Activated T-helper 1 cell treated with anti-CD3 and anti-CD28 coated beads, Interleukin-12 subunit alpha, Interleukin-12 subunit beta, Interleukin-2, Interleukin-4 antibody, amounts not matched to agents 30 ng/mL and 10 ng/mL and 1 ng/mL, durations not matched to agents 14 hours and 24 hours and 36 hours (primary cell): ENCODE measurements at regions of chr19 and their contacts with region 1.

Region 1: GRCh38 chr19:40305403-40305802 is 20.3 kb upstream of the AKT2 start:
- DNase-seq: peak; percentile 56
- H3K4me3 Mint-ChIP-seq: no peak overlapping the region
- H3K27ac Mint-ChIP-seq: no peak overlapping the region
- H3K4me1 Mint-ChIP-seq: no peaks in the 10 kb centered on the region
- H3K27me3 Mint-ChIP-seq: no peaks in the 10 kb centered on the region

Region 2: GRCh38 chr19:40365613-40366401 is 60.4 kb after region 1 on chr19:
- intact Hi-C with region 1: no loop called
- DNase-seq: no peak
- H3K4me3 Mint-ChIP-seq: peak overlapping the region; percentile 56
- H3K27ac Mint-ChIP-seq: no peak overlapping the region
- H3K4me1 Mint-ChIP-seq: peaks cover 14% of the 10 kb centered on the region
- H3K27me3 Mint-ChIP-seq: no peaks in the 10 kb centered on the region

Region 3: GRCh38 chr19:40403262-40403984 is 98.0 kb after region 1 on chr19:
- intact Hi-C with region 1: loop called (anchors 5 kb)
- DNase-seq: peak; percentile 80
- H3K4me3 Mint-ChIP-seq: peak overlapping the region; percentile 83
- H3K27ac Mint-ChIP-seq: peak overlapping the region; percentile 72
- H3K4me1 Mint-ChIP-seq: peaks cover 21% of the 10 kb centered on the region
- H3K27me3 Mint-ChIP-seq: peaks cover 7% of the 10 kb centered on the region

Region 4: GRCh38 chr19:40433391-40434216 is 128.2 kb after region 1 on chr19:
- intact Hi-C with region 1: no loop called
- DNase-seq: peak; percentile 60
- H3K4me3 Mint-ChIP-seq: peak overlapping the region; percentile 88
- H3K27ac Mint-ChIP-seq: peak overlapping the region; percentile 92
- H3K4me1 Mint-ChIP-seq: peaks cover 8% of the 10 kb centered on the region
- H3K27me3 Mint-ChIP-seq: no peaks in the 10 kb centered on the region

Region 5: GRCh38 chr19:40523322-40524047 is 218.1 kb after region 1 on chr19:
- intact Hi-C with region 1: loop called (anchors 2 kb)
- DNase-seq: peak; percentile 41
- H3K4me3 Mint-ChIP-seq: no peak overlapping the region
- H3K27ac Mint-ChIP-seq: no peak overlapping the region
- H3K4me1 Mint-ChIP-seq: no peaks in the 10 kb centered on the region
- H3K27me3 Mint-ChIP-seq: peaks cover 13% of the 10 kb centered on the region